Ascending aorta (tissue), 2 donors: ENCODE measurements at regions of chr12 and their contacts with region 1.

Region 1: DNA sequence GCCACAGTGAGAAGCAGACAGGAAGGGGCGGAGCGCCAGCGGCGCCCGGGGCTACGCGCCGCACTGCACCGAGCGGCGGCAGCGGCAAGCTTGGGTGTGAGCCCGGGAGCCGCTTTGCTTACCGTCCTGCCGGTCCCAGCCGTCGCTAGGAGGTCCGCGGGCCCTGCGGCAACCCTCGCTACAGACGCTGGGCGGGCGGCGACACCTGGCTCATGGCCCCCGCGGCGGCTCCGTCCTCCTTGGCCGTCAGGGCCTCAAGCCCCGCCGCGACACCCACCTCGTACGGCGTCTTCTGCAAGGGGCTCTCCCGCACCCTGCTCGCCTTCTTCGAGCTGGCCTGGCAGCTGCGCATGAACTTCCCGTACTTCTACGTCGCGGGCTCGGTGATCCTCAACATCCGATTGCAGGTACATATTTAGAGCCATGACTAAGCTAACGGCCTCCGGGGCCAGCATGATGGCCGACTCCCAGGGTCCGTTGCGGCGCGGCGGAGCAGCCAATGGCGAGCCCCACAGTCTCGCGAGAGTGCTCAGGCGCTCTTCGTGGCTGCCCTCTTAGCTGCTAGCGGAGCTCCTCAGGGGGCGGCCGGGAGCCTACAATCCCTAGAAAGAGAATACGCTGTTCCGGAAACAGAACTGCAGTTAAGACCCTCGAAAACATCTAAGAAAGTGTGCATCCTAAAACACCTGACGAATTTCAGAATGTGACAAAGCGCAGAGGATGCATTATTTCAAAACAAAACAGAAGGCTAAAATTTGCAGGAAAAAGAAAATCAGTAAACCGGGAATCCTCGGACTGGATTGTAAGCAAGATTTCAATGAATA is at the start of gene SMIM10L1:
- DNase-seq: peak; percentile 66 to 97
- H3K4me3 ChIP-seq: peak within 1 kb of the TSS; percentile 58 to 90
- H3K27ac ChIP-seq: peak within 1 kb of the TSS; percentile 94 to 99
- H3K4me1 ChIP-seq: peaks cover 3 to 18% of the 10 kb centered on the region in 2 donors
- H3K27me3 ChIP-seq: no peaks in the 10 kb centered on the region
- CTCF ChIP-seq: no peak
- total RNA-seq, gene SMIM10L1: 8.0 TPM

Region 2: DNA sequence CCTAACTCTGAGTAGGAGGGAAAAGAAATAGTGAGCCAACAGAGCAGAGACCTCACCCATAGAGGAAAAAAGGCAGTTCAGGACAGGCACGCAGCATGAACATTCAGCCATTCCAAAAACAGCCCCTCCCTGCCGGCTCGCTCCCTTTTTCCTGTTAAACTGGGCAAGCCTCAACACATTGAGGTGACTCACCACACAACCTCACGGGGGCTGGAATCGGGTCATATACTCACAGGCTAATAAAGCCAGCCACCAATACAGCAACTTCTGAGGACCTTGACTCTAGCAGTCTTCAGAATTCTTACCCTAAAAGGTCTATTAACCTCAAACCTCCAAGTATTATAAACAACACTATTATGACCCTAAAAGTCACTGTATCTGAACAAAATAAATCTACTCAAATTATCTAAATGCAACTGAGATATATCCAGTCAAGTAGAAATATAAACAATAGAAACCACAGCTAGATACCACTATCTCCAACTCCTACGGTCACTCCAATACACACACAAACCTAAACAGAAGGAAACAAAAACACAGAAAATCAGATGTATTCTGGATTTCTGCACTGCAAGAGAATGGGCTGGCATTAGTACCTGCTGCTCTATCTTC is 454.5 kb before region 1 on chr12:
- intact Hi-C with region 1: loop called (anchors 5 kb)
- DNase-seq: peak; percentile 73 to 95
- H3K4me3 ChIP-seq: peak overlapping the region in 1 of 2 donors; percentile 23
- H3K27ac ChIP-seq: peak overlapping the region; percentile 69 to 98
- H3K4me1 ChIP-seq: peaks cover 0 to 35% of the 10 kb centered on the region in 2 donors
- H3K27me3 ChIP-seq: no peaks in the 10 kb centered on the region
- CTCF ChIP-seq: no peak

Region 3: GRCh38 chr12:10959804-10960203 is 211.6 kb before region 1 on chr12:
- intact Hi-C with region 1: no loop called
- DNase-seq: no peak
- H3K4me3 ChIP-seq: no peak overlapping the region
- H3K27ac ChIP-seq: no peak overlapping the region
- H3K4me1 ChIP-seq: no peaks in the 10 kb centered on the region
- H3K27me3 ChIP-seq: no peaks in the 10 kb centered on the region
- CTCF ChIP-seq: no peak